ENCODE measurements at regions of chr22 and their contacts with region 1.

Region 1: DNA sequence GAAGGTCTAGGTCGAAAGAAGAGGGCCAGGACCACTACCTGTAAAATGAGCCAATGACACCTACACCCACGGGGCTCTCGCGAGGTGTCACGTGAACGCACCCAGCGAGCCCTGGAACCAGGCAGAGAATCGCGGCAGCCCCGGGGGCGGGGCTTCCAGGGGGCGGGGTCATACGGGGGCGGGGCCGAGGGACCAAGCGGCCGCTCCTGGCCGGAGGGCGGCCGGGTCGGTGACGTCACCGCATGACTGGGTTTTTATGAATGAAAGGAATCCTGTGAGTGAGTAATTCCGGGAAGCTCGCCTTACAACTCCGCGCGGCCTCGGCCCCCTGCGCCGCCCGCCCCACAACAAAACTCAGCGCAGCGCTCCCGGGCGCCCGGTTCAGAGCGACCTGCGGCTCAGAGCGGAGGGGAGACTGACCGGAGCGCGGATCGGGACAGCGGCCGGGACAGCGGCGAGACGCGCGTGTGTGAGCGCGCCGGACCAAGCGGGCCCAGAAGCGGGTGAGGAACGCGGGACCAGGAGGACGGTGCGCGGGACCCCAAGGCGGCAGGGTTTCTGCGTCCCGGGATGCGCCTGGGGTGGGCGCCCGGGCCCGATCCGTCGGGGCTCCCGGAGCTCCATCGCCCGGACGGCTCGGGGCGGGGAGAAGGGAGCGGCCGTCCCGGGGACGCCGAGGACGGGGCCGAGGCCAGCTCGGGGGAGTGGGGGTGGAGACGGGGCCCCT is at the start of gene MAFF:
- DNase-seq: peak; percentile 95 to 97
- H3K4me3 ChIP-seq: peak within 1 kb of the TSS; percentile 93
- H3K27ac ChIP-seq: peak within 1 kb of the TSS; percentile 91
- H3K4me1 ChIP-seq: peaks cover 14% of the 10 kb centered on the region
- H3K27me3 ChIP-seq: no peaks in the 10 kb centered on the region
- CTCF ChIP-seq: no peak
- total RNA-seq, gene MAFF: 27.9 and 41.8 TPM in 2 replicates

Region 2: GRCh38 chr22:37862570-37863325 is 339.1 kb before region 1 on chr22:
- CTCF ChIA-PET with region 1: no interaction called
- POLR2A ChIA-PET with region 1: no interaction called
- intact Hi-C with region 1: no loop called
- DNase-seq: no peak
- H3K4me3 ChIP-seq: no peak overlapping the region
- H3K27ac ChIP-seq: no peak overlapping the region
- H3K4me1 ChIP-seq: no peaks in the 10 kb centered on the region
- H3K27me3 ChIP-seq: no peaks in the 10 kb centered on the region
- CTCF ChIP-seq: no peak

Region 3: GRCh38 chr22:38062791-38063190 is 139.1 kb before region 1 on chr22:
- CTCF ChIA-PET with region 1: no interaction called
- POLR2A ChIA-PET with region 1: interaction called, 10 read pairs
- intact Hi-C with region 1: loop called (anchors 10 kb)
- DNase-seq: no peak
- H3K4me3 ChIP-seq: no peak overlapping the region
- H3K27ac ChIP-seq: no peak overlapping the region
- H3K4me1 ChIP-seq: peaks cover 6% of the 10 kb centered on the region
- H3K27me3 ChIP-seq: no peaks in the 10 kb centered on the region
- CTCF ChIP-seq: no peak

Region 4: DNA sequence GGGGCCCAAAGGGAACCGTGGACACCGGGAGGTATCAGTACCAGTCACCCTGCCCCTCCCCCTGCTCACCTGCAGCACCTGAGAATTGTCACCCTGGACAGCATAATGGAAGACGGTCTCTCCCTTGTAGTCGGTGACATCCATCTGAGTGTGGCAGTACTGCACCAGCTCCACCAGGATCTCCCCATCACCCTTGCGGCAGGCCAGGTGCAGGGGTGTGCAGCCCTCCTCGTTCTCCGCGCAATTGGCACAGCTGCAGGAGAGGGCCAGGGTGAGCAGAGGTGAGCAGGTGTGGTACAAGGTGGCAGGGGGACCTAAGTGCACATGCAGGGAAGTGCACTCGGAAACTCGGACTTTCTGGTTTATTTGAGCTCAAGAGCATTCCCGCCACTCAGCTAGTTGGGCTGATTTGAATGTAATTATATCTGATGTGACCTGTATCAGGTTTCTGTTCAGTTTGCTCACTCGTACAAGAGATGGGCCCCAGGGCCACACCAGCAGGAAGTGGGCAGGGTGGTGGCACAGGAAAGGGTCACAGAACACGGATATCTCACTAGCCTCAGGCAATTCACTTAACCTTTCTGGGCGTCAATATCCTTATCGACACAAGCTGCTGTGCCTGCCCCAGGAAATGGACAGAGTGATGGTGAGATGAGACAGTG is 58.7 kb before region 1 on chr22:
- CTCF ChIA-PET with region 1: no interaction called
- POLR2A ChIA-PET with region 1: interaction called, 5 read pairs
- intact Hi-C with region 1: loop called (anchors 2 kb)
- DNase-seq: peak; percentile 88 to 98
- H3K4me3 ChIP-seq: no peak overlapping the region
- H3K27ac ChIP-seq: peak overlapping the region; percentile 82
- H3K4me1 ChIP-seq: peaks cover 57% of the 10 kb centered on the region
- H3K27me3 ChIP-seq: no peaks in the 10 kb centered on the region
- CTCF ChIP-seq: 0 out of 2 replicates have a peak, but pooled peaks have one; percentile 26

Region 5: GRCh38 chr22:38214256-38215056 is 12.6 kb after region 1 on chr22:
- CTCF ChIA-PET with region 1: no interaction called
- POLR2A ChIA-PET with region 1: interaction called, 13 read pairs
- intact Hi-C with region 1: no loop called
- DNase-seq: no peak
- H3K4me3 ChIP-seq: no peak overlapping the region
- H3K27ac ChIP-seq: no peak overlapping the region
- H3K4me1 ChIP-seq: peaks cover 38% of the 10 kb centered on the region
- H3K27me3 ChIP-seq: no peaks in the 10 kb centered on the region
- CTCF ChIP-seq: no peak

Region 6: DNA sequence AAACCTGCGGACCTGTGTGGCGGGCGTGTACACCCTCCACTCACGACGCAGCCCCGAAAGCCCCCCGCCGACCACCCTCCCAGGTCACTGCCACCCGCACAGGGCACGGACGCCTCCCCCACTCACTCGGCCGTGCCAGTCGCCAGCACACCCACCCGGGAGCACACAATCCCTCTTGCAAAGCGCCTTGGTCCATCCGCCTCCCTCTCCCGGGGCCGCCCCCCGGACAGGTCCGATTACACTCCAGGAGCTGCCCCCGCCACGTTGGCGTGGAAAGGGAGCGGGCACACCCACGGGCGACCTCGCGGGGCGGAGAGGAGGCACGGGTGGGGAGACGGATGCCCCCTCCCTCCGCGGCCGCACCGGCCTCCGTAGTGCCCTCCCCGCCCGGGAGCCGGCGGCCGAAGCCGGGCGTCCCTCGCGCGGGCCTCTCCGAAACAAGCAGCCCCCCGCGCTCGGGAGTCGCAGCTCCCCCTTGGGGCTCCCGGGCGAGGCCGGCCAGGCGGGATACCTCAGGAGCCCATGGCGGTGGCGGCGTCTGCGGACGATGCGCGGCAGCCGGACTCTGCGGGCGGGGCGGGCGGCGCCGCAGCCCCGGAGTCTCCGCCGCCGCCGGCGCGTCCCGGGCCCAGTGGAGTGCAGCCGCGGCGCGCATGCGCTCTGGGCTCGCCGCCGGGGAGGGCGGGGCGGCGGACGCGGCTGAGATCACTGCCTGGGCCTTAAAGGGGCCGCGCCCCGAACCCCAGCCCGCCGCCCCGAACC is 70.7 kb after region 1 on chr22 and contains the start of gene TMEM184B:
- CTCF ChIA-PET with region 1: no interaction called
- POLR2A ChIA-PET with region 1: interaction called, 9 read pairs
- intact Hi-C with region 1: loop called (anchors 2 kb)
- DNase-seq: peak in 1 of 2 experiments; percentile 86
- H3K4me3 ChIP-seq: peak within 1 kb of the TSS; percentile 90
- H3K27ac ChIP-seq: peak within 1 kb of the TSS; percentile 62
- H3K4me1 ChIP-seq: peaks cover 41% of the 10 kb centered on the region
- H3K27me3 ChIP-seq: no peaks in the 10 kb centered on the region
- CTCF ChIP-seq: no peak
- total RNA-seq, gene TMEM184B: 185 and 192 TPM in 2 replicates

Region 7: DNA sequence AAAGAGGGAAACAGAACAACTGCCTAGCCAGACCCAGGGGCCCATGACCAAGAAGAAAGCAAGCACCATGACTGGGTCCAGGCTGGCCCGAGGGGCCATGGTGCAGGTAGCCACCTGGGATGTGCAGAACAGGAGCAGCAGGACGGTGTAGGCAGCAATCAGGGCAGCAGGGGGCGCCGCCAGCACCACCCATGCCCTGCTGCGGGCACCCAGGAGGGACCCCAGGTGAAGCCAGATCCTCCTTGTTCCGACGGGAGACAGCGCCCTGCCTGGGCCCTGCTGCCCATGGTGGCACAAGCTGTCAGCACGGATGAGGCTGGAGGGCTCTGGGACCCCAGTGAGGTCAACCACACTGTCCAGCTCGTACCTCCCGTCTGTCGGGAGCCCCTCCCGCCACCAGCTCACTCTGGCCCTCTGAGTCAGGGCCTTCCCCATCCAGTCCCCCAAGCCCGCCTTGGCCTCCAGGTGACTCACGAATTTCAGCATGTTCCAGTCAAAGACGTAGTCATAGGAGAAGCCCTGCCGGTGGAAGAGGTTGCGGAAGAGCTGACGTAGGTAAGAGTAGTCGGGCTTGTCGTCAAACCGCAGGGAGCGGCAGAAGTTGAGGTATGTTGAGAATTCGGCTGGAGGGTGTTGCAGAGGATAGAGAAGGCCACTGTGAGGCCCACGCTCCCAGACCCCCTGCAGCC is 96.6 kb after region 1 on chr22:
- CTCF ChIA-PET with region 1: no interaction called
- POLR2A ChIA-PET with region 1: no interaction called
- intact Hi-C with region 1: loop called (anchors 1 kb)
- DNase-seq: peak; percentile 97 to 100
- H3K4me3 ChIP-seq: peak overlapping the region; percentile 27; the same call in 1 of the 2 replicates
- H3K27ac ChIP-seq: peak overlapping the region; percentile 97
- H3K4me1 ChIP-seq: peaks cover 77% of the 10 kb centered on the region
- H3K27me3 ChIP-seq: no peaks in the 10 kb centered on the region
- CTCF ChIP-seq: peak; percentile 92